Mucosa of descending colon (tissue), 3 donors: ENCODE measurements at regions of chr15 and their contacts with region 1.

Region 1: DNA sequence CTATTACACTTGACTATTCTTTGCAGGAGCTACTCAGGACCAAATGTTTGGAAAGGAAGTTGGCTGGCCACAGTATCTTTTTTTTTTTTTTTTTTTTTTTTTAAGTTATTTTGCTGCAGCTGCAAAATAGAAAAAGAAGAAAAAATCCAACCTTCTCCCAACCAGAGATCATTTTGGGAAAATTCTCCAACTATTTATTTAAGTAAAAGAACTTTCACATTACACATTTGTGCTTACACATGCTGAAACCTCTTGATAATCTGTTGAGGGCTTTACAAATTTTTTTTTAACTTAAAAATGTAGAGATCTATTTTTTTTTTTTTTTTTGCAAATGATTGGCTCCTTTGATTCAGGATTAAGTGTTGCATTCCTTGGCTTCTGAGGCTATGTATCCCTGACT is 148.0 kb downstream of the POLR2M start:
- DNase-seq: no peak
- ATAC-seq: no peak
- H3K4me3 ChIP-seq: no peak overlapping the region
- H3K4me1 ChIP-seq: no peaks in the 10 kb centered on the region
- CTCF ChIP-seq: no peak

Region 2: GRCh38 chr15:57751177-57751800 is 103.2 kb before region 1 on chr15:
- intact Hi-C with region 1: loop called in 1 of 2 experiments (anchors 5 kb)
- DNase-seq: peak in 1 of 3 donors; percentile 26
- ATAC-seq: peak; percentile 49
- H3K4me3 ChIP-seq: no peak overlapping the region
- H3K4me1 ChIP-seq: no peaks in the 10 kb centered on the region
- CTCF ChIP-seq: no peak

Region 3: GRCh38 chr15:58103482-58103881 is 249.0 kb after region 1 on chr15:
- intact Hi-C with region 1: no loop called
- DNase-seq: no peak
- ATAC-seq: no peak
- H3K4me3 ChIP-seq: no peak overlapping the region
- H3K4me1 ChIP-seq: no peaks in the 10 kb centered on the region
- CTCF ChIP-seq: no peak